CD4-positive, alpha-beta T cell (primary cell): ENCODE measurements at regions of chr10 and their contacts with region 1.

Region 1: GRCh38 chr10:110158051-110159005 is 49.1 kb upstream of the MXI1 start:
- DNase-seq: no peak
- ATAC-seq: no peak
- H3K4me3 ChIP-seq: no peak overlapping the region
- H3K4me3 Mint-ChIP-seq: no peak overlapping the region
- H3K27ac ChIP-seq: no peak overlapping the region
- H3K27ac Mint-ChIP-seq: no peak overlapping the region
- H3K4me1 ChIP-seq: peaks cover 19% of the 10 kb centered on the region
- H3K4me1 Mint-ChIP-seq: peaks cover 16% of the 10 kb centered on the region
- H3K27me3 ChIP-seq: peaks cover 51% of the 10 kb centered on the region in 2 experiments
- H3K27me3 Mint-ChIP-seq: peaks cover 89% of the 10 kb centered on the region
- CTCF ChIP-seq: no peak

Region 2: GRCh38 chr10:110081911-110082310 is 76.4 kb before region 1 on chr10:
- CTCF ChIA-PET with region 1: no interaction called
- POLR2A ChIA-PET with region 1: no interaction called
- intact Hi-C with region 1: no loop called
- DNase-seq: peak in 5 of 14 experiments; percentile 22 to 60 (median 54)
- ATAC-seq: peak; percentile 11
- H3K4me3 ChIP-seq: no peak overlapping the region
- H3K4me3 Mint-ChIP-seq: peak overlapping the region; percentile 55
- H3K27ac ChIP-seq: peak overlapping the region in 1 of 2 donors; percentile 39
- H3K27ac Mint-ChIP-seq: peak overlapping the region; percentile 85
- H3K4me1 ChIP-seq: peaks cover 41% of the 10 kb centered on the region
- H3K4me1 Mint-ChIP-seq: peaks cover 97% of the 10 kb centered on the region
- H3K27me3 ChIP-seq: no peaks in the 10 kb centered on the region
- H3K27me3 Mint-ChIP-seq: no peaks in the 10 kb centered on the region
- CTCF ChIP-seq: no peak

Region 3: DNA sequence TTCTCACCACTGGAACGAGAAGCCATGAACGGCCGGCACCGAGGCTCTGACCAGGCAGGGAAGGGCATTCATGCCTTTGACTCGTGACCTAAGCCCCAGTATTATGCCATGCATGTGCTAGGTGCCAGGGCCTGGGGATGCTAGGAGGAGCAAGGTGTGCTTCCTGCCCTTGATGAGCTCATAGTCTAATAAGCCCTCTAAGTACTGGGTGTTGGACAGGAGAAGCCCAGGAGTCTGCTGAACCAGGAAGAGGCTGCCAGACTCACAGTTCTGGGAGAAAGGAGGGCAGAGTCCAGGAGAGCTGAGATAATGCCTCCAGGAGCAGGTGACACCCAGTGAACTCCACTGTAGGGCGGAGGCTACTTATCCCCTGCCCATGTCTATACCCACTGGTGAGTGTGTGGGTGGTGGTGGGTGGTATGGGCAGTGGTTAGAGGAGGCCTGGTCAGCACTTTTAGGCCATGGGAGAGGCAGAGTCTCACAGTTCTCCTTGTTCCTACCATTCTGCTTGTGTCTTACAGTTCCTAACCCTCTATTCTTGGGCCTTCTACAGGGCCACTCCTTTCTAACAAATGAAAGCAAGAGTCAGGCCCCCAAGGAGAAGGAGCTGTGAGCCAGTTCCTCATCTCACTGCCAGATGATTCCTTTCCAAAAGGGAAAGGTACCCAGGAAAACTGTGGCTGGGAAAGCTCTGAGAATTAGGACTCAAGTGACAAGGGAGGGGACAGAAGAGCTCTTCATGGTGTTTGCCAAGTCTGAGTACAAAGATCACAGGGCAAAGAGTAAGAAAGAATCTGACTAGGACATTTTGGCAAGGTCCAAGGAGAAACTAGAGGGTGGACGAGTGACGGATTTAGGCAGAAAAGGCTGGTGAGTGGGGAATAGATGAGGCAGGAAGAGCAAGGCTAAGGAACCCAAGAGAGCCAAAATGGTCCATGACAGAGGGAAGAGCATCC is 45.5 kb after region 1 on chr10:
- CTCF ChIA-PET with region 1: interaction called, 4 read pairs
- POLR2A ChIA-PET with region 1: interaction called, 88 read pairs
- intact Hi-C with region 1: loop called (anchors 5 kb)
- DNase-seq: no peak
- ATAC-seq: no peak
- H3K4me3 ChIP-seq: no peak overlapping the region
- H3K4me3 Mint-ChIP-seq: no peak overlapping the region
- H3K27ac ChIP-seq: no peak overlapping the region
- H3K27ac Mint-ChIP-seq: no peak overlapping the region
- H3K4me1 ChIP-seq: peaks cover 14% of the 10 kb centered on the region
- H3K4me1 Mint-ChIP-seq: peaks cover 8% of the 10 kb centered on the region
- H3K27me3 ChIP-seq: no peaks in the 10 kb centered on the region
- H3K27me3 Mint-ChIP-seq: peaks cover 3% of the 10 kb centered on the region
- CTCF ChIP-seq: no peak

Region 4: GRCh38 chr10:110959379-110960332 is 801.3 kb after region 1 on chr10:
- CTCF ChIA-PET with region 1: no interaction called
- POLR2A ChIA-PET with region 1: no interaction called
- intact Hi-C with region 1: no loop called
- DNase-seq: no peak
- ATAC-seq: no peak
- H3K4me3 ChIP-seq: no peak overlapping the region
- H3K4me3 Mint-ChIP-seq: no peak overlapping the region
- H3K27ac ChIP-seq: no peak overlapping the region
- H3K27ac Mint-ChIP-seq: no peak overlapping the region
- H3K4me1 ChIP-seq: no peaks in the 10 kb centered on the region
- H3K4me1 Mint-ChIP-seq: peaks cover 70% of the 10 kb centered on the region
- H3K27me3 ChIP-seq: no peaks in the 10 kb centered on the region
- H3K27me3 Mint-ChIP-seq: no peaks in the 10 kb centered on the region
- CTCF ChIP-seq: no peak